SK-N-SH (cell line): ENCODE measurements at regions of chr22 and their contacts with region 1.

Region 1: GRCh38 chr22:43993027-43993760 is 30.9 kb upstream of the PARVB start:
- DNase-seq: peak; percentile 88
- H3K4me3 ChIP-seq: peak overlapping the region in 1 of 2 experiments; percentile 27; a peak in 1 of 4 replicates
- H3K27ac ChIP-seq: no peak overlapping the region; a peak in 1 of 4 replicates
- H3K4me1 ChIP-seq: peaks cover 0 to 6% of the 10 kb centered on the region in 2 experiments; a peak in 1 of 4 replicates
- H3K27me3 ChIP-seq: no peaks in the 10 kb centered on the region
- CTCF ChIP-seq: peak; percentile 98
- EP300 ChIP-seq: no peak
- RAD21 ChIP-seq: peak; percentile 91

Region 2: GRCh38 chr22:43921361-43921760 is 71.8 kb before region 1 on chr22:
- CTCF ChIA-PET with region 1: no interaction called
- POLR2A ChIA-PET with region 1: no interaction called
- DNase-seq: no peak
- H3K4me3 ChIP-seq: no peak overlapping the region
- H3K27ac ChIP-seq: peak overlapping the region in 1 of 2 experiments; percentile 16; a peak in 1 of 4 replicates
- H3K4me1 ChIP-seq: peaks cover 16 to 19% of the 10 kb centered on the region in 2 experiments; a peak in 3 of 4 replicates
- H3K27me3 ChIP-seq: no peaks in the 10 kb centered on the region
- CTCF ChIP-seq: no peak
- EP300 ChIP-seq: peak in 1 of 2 experiments; percentile 46; a peak in 1 of 4 replicates
- RAD21 ChIP-seq: no peak

Region 3: DNA sequence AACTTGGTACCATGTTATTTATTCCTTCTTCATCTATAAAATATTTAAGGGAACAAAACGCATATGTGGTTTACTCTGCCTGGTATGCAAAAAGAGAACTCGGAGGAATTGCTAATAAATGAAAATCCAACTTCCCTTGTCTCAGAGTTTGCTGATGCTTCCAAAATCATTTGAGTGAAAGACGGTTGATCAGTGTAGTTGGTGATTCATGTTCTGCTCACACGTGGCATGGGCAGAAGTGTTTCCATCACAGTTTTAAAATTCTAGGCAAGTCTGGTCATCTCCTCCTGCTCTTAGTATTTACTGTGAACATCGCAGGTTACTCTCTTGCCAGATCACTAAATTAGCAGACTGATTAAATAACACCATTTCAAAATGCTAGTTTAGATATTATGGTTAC is 19.0 kb after region 1 on chr22:
- CTCF ChIA-PET with region 1: interaction called, 37 read pairs
- POLR2A ChIA-PET with region 1: no interaction called
- DNase-seq: no peak
- H3K4me3 ChIP-seq: no peak overlapping the region
- H3K27ac ChIP-seq: no peak overlapping the region
- H3K4me1 ChIP-seq: no peaks in the 10 kb centered on the region; a peak in 1 of 4 replicates
- H3K27me3 ChIP-seq: no peaks in the 10 kb centered on the region
- CTCF ChIP-seq: no peak
- EP300 ChIP-seq: no peak
- RAD21 ChIP-seq: no peak

Region 4: DNA sequence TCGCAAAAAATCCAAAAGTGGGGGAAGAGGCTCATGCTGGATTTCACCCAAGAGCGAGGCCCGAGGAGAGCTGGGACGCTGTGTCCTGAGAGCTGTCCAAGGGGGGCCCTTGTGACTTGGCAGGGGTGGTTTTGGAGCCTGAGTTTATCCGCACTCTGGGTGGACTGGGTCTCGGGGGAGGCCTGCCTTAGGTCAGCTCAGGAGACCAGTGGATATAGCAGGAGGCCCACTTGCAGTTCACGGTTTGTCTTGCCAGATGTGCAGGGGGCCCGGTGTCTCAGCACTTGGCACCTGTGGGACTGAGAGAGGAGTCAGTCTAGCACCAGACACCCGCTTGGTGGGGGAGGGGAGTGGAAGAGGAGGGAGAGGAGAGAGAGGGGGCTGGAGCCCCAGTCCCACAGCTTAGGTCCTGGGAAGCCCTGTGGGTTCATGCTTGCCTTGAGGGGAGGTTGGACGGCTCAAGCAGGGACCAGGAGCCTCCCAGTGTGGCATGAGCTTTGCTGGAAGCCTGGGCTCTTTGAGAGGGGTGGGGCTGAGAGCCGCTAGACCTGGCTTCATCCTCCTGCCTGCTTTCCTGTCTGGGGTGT is 64.3 kb after region 1 on chr22:
- CTCF ChIA-PET with region 1: interaction called, 19 read pairs
- POLR2A ChIA-PET with region 1: no interaction called
- DNase-seq: no peak
- H3K4me3 ChIP-seq: no peak overlapping the region
- H3K27ac ChIP-seq: no peak overlapping the region
- H3K4me1 ChIP-seq: peaks cover 0 to 6% of the 10 kb centered on the region in 2 experiments; a peak in 1 of 4 replicates
- H3K27me3 ChIP-seq: no peaks in the 10 kb centered on the region
- CTCF ChIP-seq: no peak
- EP300 ChIP-seq: no peak
- RAD21 ChIP-seq: no peak

Region 5: DNA sequence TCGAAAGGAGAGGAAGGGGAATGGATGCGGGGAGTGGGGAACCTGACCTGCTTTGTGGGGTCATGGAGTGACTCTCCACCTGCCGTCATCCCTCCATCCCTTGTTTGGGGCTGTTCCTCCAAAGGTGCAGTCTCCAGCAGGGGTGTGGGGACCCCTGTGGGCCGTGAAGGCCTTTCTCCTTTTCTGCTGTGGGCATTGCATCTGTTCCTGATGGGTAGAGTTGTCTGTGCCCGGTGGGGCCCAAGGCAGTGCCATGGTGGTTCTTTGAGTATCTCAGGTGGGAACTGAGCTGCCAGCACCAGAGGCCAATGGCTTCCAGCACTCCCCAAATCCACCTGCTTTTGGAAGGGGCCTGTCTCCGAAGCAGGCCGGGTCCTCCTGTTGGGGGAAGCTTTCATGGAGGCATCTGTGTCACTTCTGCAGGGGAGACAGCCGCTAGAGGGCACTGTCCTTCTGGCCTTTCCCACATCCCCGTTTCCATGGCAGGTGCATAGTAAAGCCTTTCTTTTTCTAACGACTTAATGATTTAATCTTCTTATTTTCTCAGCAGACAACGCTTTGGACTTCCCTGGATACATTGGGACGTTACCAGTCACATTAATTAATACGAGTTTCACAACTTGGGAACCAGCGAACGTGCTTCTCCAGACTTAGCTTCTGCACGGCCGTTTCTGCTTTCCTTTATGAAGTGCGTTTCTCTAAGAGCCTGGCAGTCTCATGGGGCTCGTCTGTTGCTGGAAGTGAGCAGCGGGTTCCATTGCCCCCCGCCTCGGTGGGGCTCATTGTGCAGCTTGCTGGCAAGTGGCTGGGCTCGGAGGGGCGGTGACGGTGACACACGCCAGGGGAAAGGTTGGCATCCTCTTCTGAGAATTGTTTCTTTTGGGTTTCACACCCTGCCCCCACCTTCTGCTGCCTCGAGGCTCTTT is 88.0 kb after region 1 on chr22:
- CTCF ChIA-PET with region 1: interaction called, 234 read pairs
- POLR2A ChIA-PET with region 1: interaction called, 3 read pairs
- DNase-seq: peak; percentile 88
- H3K4me3 ChIP-seq: no peak overlapping the region
- H3K27ac ChIP-seq: no peak overlapping the region
- H3K4me1 ChIP-seq: no peaks in the 10 kb centered on the region; a peak in 1 of 4 replicates
- H3K27me3 ChIP-seq: no peaks in the 10 kb centered on the region
- CTCF ChIP-seq: peak; percentile 91
- EP300 ChIP-seq: no peak
- RAD21 ChIP-seq: peak; percentile 85

Region 6: DNA sequence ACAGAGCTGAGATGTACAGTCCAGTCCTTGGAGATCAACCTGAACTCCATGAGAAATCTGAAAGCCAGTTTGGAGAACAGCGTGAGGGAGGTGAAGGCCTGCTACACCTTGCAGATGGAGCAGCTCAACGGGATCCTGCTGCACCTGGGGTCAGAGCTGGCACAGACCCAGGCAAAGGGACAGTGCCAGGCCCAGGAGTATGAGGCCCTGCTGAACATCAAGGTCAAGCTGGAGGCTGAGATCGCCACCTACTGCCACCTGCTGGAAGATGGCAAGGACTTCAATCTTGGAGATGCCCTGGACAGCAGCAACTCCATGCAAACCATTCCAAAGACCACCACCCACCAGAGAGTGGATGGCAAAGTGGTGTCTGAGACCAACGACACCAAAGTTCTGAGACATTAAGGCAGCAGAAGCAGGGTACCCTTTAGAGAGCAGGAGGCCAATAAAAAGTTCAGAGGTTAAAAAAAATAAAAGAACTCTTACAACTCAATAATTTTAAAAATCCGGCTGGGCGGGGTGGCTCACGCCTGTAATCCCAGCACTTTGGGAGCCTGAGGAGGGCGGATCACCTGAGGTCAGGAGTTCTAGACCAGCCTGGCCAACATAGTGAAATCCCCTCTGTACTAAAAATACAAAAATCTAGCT is 574.8 kb after region 1 on chr22:
- CTCF ChIA-PET with region 1: interaction called, 11 read pairs
- POLR2A ChIA-PET with region 1: no interaction called
- DNase-seq: no peak
- H3K4me3 ChIP-seq: no peak overlapping the region
- H3K27ac ChIP-seq: no peak overlapping the region
- H3K4me1 ChIP-seq: no peaks in the 10 kb centered on the region
- H3K27me3 ChIP-seq: no peaks in the 10 kb centered on the region
- CTCF ChIP-seq: peak; percentile 53
- EP300 ChIP-seq: no peak
- RAD21 ChIP-seq: peak; percentile 48